BJ (cell line): ENCODE measurements at regions of chr1 and their contacts with region 1.

Region 1: GRCh38 chr1:225474986-225475820 is 47.4 kb upstream of the LBR start:
- DNase-seq: no peak
- H3K4me3 ChIP-seq: no peak overlapping the region
- H3K27me3 ChIP-seq: no peaks in the 10 kb centered on the region; the same call in 1 of the 2 replicates
- CTCF ChIP-seq: peak; percentile 90

Region 2: DNA sequence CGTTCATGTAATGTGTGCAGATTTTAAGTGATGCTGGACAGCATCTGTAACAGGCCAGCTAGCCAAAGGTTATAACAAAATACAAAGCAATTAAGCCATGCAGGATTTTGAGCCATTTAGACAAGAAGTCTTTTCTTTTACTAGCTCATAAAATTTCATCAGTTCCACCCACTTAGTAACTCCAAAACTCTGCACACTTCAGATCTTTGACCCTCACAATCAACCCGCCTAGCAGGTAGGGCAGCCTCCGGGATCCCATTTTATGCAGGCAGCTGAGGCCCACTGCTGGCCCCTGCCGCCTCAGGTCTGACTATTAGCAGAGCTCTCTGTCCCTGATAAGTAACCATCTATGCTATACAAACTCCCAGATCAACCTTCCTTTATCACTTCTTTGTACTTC is 56.6 kb before region 1 on chr1:
- CTCF ChIA-PET with region 1: no interaction called
- POLR2A ChIA-PET with region 1: no interaction called
- DNase-seq: no peak
- H3K4me3 ChIP-seq: no peak overlapping the region
- H3K27me3 ChIP-seq: no peaks in the 10 kb centered on the region
- CTCF ChIP-seq: no peak

Region 3: GRCh38 chr1:225572422-225572821 is 97.2 kb after region 1 on chr1:
- CTCF ChIA-PET with region 1: no interaction called
- POLR2A ChIA-PET with region 1: no interaction called
- DNase-seq: no peak
- H3K4me3 ChIP-seq: no peak overlapping the region
- H3K27me3 ChIP-seq: no peaks in the 10 kb centered on the region
- CTCF ChIP-seq: peak; percentile 48

Region 4: DNA sequence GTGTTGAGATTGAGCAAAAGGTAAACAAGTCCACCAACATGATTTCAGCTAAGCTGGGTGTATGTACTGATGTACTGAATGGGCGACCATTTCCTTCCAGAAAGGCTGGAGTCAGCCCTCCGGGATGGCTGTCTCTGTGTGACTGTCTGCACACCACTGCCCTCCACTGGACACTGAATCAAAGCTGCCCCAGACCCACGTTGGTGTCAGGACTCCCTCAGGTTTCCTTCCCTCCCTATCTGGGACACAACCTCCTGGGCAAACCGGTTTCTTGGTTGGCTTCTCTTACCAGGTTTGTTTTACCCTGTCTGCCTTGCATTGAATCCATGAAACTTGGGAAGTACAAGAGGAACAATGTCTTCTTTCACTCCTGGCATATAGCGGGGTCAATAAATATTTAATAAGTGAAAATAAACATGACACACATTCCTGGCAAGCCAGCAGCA is 297.1 kb after region 1 on chr1:
- CTCF ChIA-PET with region 1: interaction called, 231 read pairs
- POLR2A ChIA-PET with region 1: no interaction called
- DNase-seq: no peak
- H3K4me3 ChIP-seq: no peak overlapping the region
- H3K27me3 ChIP-seq: no peaks in the 10 kb centered on the region
- CTCF ChIP-seq: peak; percentile 90

Region 5: GRCh38 chr1:225809842-225810578 is 334.8 kb after region 1 on chr1 and contains the start of gene EPHX1:
- CTCF ChIA-PET with region 1: interaction called, 11 read pairs
- POLR2A ChIA-PET with region 1: no interaction called
- DNase-seq: peak; percentile 32
- H3K4me3 ChIP-seq: peak within 1 kb of the TSS; percentile 73
- H3K27me3 ChIP-seq: no peaks in the 10 kb centered on the region
- CTCF ChIP-seq: peak; percentile 59
- polyA plus RNA-seq, gene EPHX1: 17.9 and 34.3 TPM in 2 replicates

Region 6: DNA sequence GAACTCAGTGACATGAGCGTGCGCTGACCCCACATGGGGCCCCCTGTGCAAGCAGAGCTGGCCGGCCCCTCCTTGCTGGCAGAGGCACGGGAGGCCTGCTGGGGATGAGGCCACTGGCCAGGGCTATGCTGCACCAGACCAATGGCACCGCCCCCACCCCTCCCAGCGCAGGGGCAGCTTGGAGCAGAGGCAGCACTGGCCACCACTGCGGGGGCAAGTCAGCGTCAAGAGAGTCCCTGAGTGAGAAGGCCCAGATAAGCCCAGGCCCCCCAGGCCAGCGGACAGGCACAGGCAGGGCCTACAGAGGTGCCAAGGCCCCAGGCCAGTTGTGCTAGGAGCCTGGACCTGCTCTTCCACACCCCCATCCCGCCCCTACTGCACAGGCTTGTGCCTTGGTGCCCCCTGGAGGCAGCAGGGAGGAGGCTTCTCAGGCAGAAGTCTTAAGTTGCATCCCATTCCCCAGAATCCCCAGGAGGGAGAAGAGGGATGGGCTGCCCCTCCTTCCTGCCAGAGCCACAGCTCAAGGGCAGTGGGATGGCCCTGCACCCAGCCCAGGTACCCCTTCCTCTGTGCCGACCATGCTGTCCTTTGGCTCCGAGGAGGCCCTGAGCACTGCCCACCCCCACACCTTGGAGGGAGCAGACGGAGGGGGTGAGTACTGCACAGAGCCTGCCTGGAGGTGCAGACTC is 370.5 kb after region 1 on chr1:
- CTCF ChIA-PET with region 1: interaction called, 57 read pairs
- POLR2A ChIA-PET with region 1: no interaction called
- DNase-seq: no peak
- H3K4me3 ChIP-seq: no peak overlapping the region
- H3K27me3 ChIP-seq: no peaks in the 10 kb centered on the region
- CTCF ChIP-seq: peak; percentile 87

Region 7: GRCh38 chr1:225977937-225978748 is 502.9 kb after region 1 on chr1:
- CTCF ChIA-PET with region 1: interaction called, 44 read pairs
- POLR2A ChIA-PET with region 1: interaction called, 3 read pairs
- DNase-seq: no peak
- H3K4me3 ChIP-seq: no peak overlapping the region
- H3K27me3 ChIP-seq: no peaks in the 10 kb centered on the region
- CTCF ChIP-seq: no peak